ENCODE measurements at regions of chr2 and their contacts with region 1.

Region 1: DNA sequence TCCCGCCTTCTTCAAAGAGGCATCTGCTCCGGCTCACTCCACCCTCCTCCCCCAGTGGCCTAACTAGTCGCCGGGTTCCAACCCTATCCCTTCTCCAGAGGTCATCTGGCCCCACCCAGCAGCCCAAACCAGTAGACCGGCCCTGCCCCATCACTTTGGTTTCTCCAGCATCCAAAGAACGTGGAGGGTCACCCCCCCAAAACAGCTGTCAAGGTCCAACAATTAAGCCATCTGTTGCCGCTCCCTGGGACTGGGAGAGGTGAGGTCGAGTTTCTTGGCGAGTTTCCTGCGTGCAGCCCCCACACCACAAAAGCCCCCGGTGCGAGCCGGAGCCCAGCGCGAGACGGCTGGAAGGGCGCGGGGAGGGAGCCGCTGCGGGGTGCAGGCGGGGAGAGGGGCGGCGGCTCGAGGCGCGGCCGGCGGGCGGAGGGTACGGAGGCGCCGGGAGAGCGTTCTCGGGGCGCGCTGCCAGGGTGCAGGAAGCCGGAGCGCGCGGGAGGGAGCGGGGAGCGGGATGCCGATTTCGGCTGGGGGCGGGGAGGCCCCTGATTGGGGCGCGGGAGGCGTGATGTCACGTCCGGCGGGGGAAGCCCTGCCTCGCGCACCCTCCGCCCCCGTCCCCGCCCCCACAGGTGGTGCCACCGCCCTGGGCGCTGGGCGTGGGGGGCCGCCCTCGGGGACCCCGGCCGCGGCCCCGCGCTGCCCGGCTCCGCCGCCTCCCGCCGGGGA is 571 bp upstream of the GPC1 start:
- DNase-seq: peak; percentile 99
- H3K4me3 ChIP-seq: peak overlapping the region; percentile 67 to 92
- H3K27ac ChIP-seq: peak overlapping the region; percentile 66 to 72
- H3K4me1 ChIP-seq: peaks cover 14 to 17% of the 10 kb centered on the region in 2 experiments; a peak in 2 of 4 replicates
- H3K27me3 ChIP-seq: no peaks in the 10 kb centered on the region
- CTCF ChIP-seq: no peak
- EP300 ChIP-seq: peak in 1 of 2 experiments; percentile 5; a peak in 1 of 4 replicates
- RAD21 ChIP-seq: no peak

Region 2: GRCh38 chr2:240232961-240233893 is 201.7 kb before region 1 on chr2:
- CTCF ChIA-PET with region 1: interaction called, 29 read pairs
- POLR2A ChIA-PET with region 1: no interaction called
- DNase-seq: peak; percentile 90
- H3K4me3 ChIP-seq: peak overlapping the region; percentile 26 to 43; a peak in 2 of 4 replicates
- H3K27ac ChIP-seq: no peak overlapping the region
- H3K4me1 ChIP-seq: peaks cover 0 to 23% of the 10 kb centered on the region in 2 experiments; a peak in 1 of 4 replicates
- H3K27me3 ChIP-seq: no peaks in the 10 kb centered on the region
- CTCF ChIP-seq: peak; percentile 48
- EP300 ChIP-seq: no peak
- RAD21 ChIP-seq: peak; percentile 80

Region 3: GRCh38 chr2:240397924-240398645 is 36.8 kb before region 1 on chr2:
- CTCF ChIA-PET with region 1: no interaction called
- POLR2A ChIA-PET with region 1: no interaction called
- DNase-seq: no peak
- H3K4me3 ChIP-seq: no peak overlapping the region
- H3K27ac ChIP-seq: no peak overlapping the region
- H3K4me1 ChIP-seq: peaks cover 0 to 7% of the 10 kb centered on the region in 2 experiments; a peak in 1 of 4 replicates
- H3K27me3 ChIP-seq: no peaks in the 10 kb centered on the region
- CTCF ChIP-seq: no peak
- EP300 ChIP-seq: no peak
- RAD21 ChIP-seq: no peak

Region 4: GRCh38 chr2:240449764-240450531 is 15.1 kb after region 1 on chr2:
- CTCF ChIA-PET with region 1: interaction called, 12 read pairs
- POLR2A ChIA-PET with region 1: interaction called, 3 read pairs
- DNase-seq: no peak
- H3K4me3 ChIP-seq: no peak overlapping the region
- H3K27ac ChIP-seq: no peak overlapping the region
- H3K4me1 ChIP-seq: peaks cover 6 to 24% of the 10 kb centered on the region in 2 experiments; a peak in 2 of 4 replicates
- H3K27me3 ChIP-seq: no peaks in the 10 kb centered on the region
- CTCF ChIP-seq: no peak
- EP300 ChIP-seq: no peak
- RAD21 ChIP-seq: no peak

Region 5: DNA sequence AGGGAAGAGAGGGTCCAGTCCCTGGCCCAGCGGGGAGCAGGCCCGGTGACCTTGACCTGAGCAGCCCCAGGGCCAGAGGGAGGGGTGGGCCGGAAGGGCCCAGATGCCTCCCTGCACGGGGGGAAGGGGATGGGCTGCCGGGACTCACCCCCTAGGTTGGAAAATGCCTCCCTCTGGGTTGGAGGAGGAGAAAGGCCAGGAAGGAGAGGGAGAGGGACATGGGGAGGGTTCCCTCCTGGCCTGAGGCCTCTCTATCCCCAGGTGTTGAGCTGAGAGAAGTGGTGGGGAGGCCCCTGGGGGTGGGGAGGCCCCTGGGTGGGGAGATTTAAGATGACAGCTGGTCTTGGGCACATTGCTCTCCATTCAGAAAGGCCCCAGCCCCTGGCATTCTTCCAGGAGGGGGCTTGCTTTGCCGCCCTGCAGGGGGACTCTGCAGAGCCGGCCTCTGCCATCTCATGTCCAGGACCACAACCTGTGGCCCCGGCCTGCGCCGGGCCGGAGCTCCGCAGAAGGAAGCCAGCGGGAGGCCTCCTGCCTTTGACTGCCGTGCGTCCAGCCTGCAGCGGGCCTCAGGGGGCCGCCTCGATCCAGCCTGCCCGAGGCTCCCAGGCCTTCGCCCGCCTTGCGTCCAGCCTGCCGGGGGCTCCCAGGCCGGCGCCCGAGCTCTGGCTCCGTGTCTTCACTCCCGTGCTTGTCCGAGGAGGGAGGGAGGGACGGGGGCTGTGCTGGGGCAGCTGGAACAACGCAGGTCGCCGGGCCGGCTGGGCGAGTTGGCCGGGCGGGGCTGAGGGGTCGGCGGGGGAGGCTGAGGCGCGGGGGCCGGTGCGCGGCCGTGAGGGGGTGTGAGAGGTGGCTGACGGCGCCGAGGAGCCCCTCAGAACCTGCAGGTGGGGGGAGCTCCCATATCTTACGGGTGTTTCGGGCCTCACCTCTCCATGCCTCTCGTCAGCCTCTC is 20.7 kb after region 1 on chr2:
- CTCF ChIA-PET with region 1: interaction called, 12 read pairs
- POLR2A ChIA-PET with region 1: interaction called, 3 read pairs
- DNase-seq: no peak
- H3K4me3 ChIP-seq: no peak overlapping the region
- H3K27ac ChIP-seq: no peak overlapping the region
- H3K4me1 ChIP-seq: peaks cover 6 to 25% of the 10 kb centered on the region in 2 experiments; a peak in 2 of 4 replicates
- H3K27me3 ChIP-seq: no peaks in the 10 kb centered on the region
- CTCF ChIP-seq: no peak
- EP300 ChIP-seq: no peak
- RAD21 ChIP-seq: no peak